Dorsolateral prefrontal cortex (tissue), 120 donors: ENCODE measurements at regions of chr11 and their contacts with region 1.

Region 1: DNA sequence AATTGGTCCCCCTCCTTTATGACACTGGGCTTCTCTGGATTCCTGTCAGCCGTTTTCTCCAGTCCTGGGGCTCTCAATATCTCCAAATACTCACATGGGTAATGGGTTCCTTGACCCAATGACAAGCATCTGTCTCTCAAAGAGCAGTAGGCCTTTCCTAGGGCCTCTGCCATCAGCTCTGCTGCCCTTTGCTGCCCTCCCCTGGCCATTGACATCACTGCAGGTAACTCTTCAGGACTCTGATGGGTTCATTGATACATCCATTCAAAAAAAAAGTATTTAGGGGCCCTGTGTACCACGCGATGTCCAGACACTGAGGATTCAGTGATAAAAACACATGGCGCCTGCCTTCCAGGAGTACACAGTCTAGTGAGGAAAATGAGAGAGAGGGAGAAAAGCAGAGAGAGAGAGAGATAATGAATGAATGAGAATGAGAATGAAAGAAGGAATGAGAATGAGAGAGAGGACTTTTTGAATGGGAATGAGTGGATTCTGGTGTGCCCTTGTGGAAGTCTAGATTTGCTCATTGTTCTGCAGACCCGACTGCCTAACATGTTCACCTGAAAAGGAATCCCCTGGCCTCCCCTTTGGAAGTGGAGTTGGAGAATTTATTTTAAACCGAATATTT is 42.6 kb upstream of the OLFML1 start:
- DNase-seq: peak; percentile 68 to 93 (median 80)
- H3K4me3 ChIP-seq: no peak overlapping the region
- H3K27ac ChIP-seq: no peak overlapping the region
- H3K27me3 ChIP-seq: no peaks in the 10 kb centered on the region
- CTCF ChIP-seq: peak in 55 of 56 donors; percentile 55 to 93 (median 86)

Region 2: DNA sequence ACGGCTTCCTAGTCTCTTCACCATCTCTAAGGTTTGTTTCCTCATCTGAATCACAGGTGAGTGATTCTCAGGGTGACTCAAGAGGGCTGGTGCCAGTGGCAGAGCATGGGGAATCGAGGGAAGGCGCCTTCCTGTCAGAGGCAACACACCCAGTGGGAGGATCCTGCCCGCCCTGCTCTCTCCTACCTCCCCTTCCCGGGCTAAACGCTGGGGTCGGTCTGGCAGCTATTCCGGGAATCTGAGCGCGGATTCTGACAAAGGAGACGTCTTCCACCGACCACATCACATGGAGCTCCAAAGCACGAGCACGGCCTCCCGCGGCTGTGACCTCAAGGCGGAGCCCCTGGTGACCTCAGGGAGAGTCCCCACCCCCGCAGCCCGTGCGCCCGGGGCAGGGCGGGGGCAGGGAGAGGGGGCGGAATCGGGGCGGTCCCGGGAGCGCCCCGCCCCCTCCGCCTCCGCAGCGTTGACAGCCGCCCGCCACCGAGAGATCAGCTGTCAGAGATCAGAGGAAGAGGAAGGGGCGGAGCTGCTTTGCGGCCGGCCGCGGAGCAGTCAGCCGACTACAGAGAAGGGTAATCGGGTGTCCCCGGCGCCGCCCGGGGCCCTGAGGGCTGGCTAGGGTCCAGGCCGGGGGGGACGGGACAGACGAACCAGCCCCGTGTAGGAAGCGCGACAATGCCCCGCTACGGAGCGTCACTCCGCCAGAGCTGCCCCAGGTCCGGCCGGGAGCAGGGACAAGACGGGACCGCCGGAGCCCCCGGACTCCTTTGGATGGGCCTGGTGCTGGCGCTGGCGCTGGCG is 1052.6 kb before region 1 on chr11 and contains the start of gene SMPD1:
- intact Hi-C with region 1: no loop called
- DNase-seq: peak; percentile 87 to 94 (median 92)
- H3K4me3 ChIP-seq: peak within 1 kb of the TSS; percentile 61 to 99 (median 90)
- H3K27ac ChIP-seq: peak within 1 kb of the TSS; percentile 68 to 99 (median 94)
- H3K27me3 ChIP-seq: no peaks in the 10 kb centered on the region
- CTCF ChIP-seq: peak in 24 of 56 donors; percentile 5 to 60 (median 34)
- total RNA-seq, gene SMPD1: 37.6 to 97.6 (median 53.8) TPM

Region 3: DNA sequence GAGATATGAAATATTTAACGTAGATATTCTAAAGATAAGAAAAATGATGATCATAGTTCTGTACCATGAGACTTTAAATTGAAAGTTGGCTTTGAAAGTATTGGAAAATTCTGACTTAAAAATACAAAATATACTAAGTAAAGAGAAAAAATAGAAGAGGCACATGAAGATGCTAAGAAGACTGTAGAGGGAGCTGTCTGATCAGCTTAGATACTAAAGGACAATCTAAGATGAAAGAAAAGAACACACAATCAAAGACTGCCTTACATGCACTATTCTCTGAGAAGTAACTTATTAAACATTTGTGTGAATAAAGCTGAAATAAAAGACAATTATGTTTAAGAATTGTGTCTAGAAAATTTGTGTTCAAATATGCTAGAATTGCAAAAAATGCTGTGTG is 298.8 kb before region 1 on chr11:
- intact Hi-C with region 1: loop called (anchors 2 to 5 kb)
- DNase-seq: no peak
- H3K4me3 ChIP-seq: no peak overlapping the region
- H3K27ac ChIP-seq: no peak overlapping the region
- H3K27me3 ChIP-seq: no peaks in the 10 kb centered on the region
- CTCF ChIP-seq: peak; percentile 48 to 92 (median 69)

Region 4: DNA sequence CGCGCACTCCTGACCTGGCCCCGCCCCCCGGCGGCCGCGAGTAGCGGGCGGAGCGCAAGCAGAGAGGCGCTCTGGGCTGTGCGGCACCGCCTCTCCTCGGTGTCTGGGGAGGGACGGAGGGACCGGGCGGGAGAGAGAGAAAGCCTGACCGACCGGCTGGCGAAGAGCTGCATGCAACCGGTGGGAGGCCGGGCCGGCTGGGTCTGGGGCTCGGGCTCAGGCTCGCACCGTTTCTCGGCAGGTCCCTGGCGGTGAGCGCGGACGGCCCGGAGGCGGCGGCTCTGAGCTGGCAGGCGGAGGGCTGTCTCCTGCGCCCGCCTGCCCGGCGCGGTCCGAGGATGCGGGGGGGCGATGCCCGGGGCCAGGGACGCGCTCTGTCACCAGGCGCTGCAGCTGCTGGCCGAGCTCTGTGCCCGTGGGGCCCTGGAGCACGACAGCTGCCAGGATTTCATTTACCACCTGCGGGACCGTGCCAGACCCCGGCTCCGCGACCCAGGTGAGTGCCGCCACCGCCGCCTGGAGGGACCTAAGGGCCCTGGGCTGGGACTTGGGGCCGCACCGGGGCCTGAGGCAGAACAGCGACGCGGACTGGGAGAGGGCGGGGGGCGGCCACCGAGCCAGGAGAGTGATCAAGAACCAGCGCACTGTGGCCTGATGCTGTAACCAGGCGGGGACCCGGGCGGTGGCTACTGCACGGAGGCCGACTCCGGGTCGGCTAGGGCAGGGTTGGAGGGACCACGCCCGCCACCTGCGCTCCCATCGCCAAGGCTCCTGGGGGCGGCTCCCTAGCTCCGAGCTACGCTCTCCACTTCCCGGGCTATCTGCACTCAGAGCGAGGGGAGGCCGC is 190.6 kb before region 1 on chr11 and contains the start of gene SYT9:
- intact Hi-C with region 1: loop called in 1 of 2 experiments (anchors 5 kb)
- DNase-seq: peak; percentile 38 to 83 (median 72)
- H3K4me3 ChIP-seq: peak within 1 kb of the TSS; percentile 54 to 97 (median 82)
- H3K27ac ChIP-seq: peak within 1 kb of the TSS in 53 of 59 donors; percentile 19 to 86 (median 66)
- H3K27me3 ChIP-seq: peaks cover 0 to 17% (median 0%) of the 10 kb centered on the region in 45 donors
- CTCF ChIP-seq: peak in 45 of 56 donors; percentile 4 to 66 (median 33)
- total RNA-seq, gene SYT9: 8.3 to 25.6 (median 12.9) TPM

Region 5: DNA sequence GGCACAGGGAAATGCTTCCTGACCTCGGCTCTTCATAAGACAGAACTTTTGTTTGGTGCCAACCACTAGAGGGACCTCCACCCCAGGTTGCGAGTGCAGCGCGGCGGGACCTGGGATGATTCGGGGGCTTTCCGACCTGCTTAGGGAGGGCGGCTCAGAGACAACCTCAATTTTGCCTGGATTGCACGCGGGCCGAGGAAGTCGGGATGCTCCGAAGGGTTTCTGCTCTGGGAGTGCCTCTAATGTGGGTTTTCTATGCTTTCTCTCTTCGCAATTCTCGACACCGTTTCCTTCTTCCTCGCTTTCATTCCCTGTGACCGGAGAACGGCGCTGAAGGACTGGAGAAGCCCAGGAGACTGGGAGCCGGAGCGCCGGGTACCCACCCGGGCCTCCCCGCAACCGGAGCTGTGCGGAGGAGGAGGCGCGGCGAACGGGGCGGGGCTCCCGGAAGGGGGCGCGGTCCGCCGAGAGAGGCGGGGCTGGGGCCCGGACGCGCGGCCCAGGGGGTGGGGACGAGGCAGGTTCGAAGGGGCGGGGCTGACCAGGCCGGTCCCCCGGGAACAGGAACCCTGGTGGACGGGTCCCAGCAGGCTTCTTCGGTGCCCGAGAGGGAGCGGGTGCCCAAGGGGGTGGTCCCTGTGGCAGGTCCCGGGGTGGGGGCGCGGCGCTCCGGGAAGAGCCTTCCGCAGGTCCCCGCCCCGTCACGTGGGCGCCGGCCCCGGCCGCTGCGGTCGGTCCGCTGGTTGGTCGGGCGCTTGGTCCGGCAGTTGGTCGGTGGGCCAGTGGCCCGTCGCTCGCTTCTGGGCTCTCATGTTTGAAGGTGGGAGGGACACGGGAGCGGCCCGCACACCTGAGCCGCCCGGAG is 70.8 kb after region 1 on chr11 and contains the start of gene PPFIBP2:
- intact Hi-C with region 1: loop called in 1 of 2 experiments (anchors 5 kb)
- DNase-seq: peak; percentile 66 to 88 (median 78)
- H3K4me3 ChIP-seq: peak within 1 kb of the TSS; percentile 60 to 98 (median 87)
- H3K27ac ChIP-seq: peak within 1 kb of the TSS; percentile 82 to 99 (median 96)
- H3K27me3 ChIP-seq: no peaks in the 10 kb centered on the region
- CTCF ChIP-seq: peak in 55 of 56 donors; percentile 43 to 79 (median 67)
- total RNA-seq, gene PPFIBP2: 14.4 to 115 (median 35.6) TPM

Region 6: DNA sequence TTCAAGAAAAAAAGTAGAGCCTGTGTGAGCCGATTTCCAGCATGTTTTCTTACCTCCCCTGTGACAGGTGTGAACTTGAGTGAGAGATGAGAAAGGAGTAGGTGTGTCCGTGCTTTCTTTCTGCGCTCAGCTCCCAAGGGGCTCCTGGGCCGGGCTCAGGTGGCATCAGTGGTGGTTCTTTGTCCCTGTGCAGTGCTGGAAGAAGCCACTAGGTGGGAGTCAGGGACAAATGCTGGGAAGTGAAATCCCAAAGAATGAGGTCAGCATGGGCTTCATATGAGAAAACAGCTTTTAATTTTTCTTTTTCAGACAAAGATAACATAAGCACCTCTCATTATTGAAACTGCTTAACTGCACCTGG is 128.9 kb after region 1 on chr11:
- intact Hi-C with region 1: loop called in 1 of 2 experiments (anchors 10 kb)
- DNase-seq: peak; percentile 49 to 79 (median 70)
- H3K4me3 ChIP-seq: no peak overlapping the region
- H3K27ac ChIP-seq: peak overlapping the region; percentile 26 to 99 (median 81)
- H3K27me3 ChIP-seq: no peaks in the 10 kb centered on the region
- CTCF ChIP-seq: peak; percentile 81 to 99 (median 95)

Region 7: GRCh38 chr11:7612661-7613393 is 170.1 kb after region 1 on chr11:
- intact Hi-C with region 1: no loop called
- DNase-seq: no peak
- H3K4me3 ChIP-seq: no peak overlapping the region
- H3K27ac ChIP-seq: peak overlapping the region in 24 of 59 donors; percentile 1 to 58 (median 26)
- H3K27me3 ChIP-seq: no peaks in the 10 kb centered on the region
- CTCF ChIP-seq: no peak

Region 8: DNA sequence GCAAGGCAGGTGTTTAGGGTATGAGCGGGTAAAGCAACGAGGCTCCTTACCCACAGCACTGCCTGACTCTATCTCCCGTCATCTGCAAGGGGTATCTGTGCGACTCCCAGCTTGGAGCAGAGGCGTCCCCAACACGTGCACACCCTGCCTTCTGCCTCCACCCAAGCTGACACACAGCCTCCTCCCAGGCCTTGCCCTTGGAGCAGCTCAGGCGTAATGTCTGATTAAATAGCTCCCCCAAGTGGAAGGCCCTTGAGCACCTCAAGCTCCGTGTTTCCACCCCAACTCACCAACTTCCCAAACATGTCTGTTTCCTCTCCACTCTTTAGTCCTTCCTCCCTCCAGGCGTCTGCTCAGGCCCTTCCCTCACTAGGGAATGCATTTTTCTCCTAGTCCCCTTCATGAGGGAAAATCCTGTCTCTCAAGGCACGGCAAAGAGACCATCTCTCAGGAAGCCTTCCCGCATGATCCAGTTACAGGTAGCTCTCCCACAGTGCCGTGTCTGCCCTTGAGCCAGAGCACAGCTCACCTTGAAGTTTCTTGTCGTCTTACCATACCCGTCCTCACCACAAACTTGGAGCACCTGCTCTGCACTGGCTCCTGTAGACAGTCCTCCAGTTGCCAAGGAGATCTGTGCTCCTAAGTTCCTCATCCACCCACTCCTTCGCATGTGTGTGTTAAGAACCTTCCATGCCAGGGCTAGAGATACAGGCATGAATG is 214.8 kb after region 1 on chr11:
- intact Hi-C with region 1: loop called in 1 of 2 experiments (anchors 10 kb)
- DNase-seq: peak in 9 of 10 donors; percentile 23 to 78 (median 71)
- H3K4me3 ChIP-seq: no peak overlapping the region
- H3K27ac ChIP-seq: peak overlapping the region in 56 of 59 donors; percentile 28 to 98 (median 82)
- H3K27me3 ChIP-seq: no peaks in the 10 kb centered on the region
- CTCF ChIP-seq: peak in 55 of 56 donors; percentile 50 to 90 (median 73)

Region 9: DNA sequence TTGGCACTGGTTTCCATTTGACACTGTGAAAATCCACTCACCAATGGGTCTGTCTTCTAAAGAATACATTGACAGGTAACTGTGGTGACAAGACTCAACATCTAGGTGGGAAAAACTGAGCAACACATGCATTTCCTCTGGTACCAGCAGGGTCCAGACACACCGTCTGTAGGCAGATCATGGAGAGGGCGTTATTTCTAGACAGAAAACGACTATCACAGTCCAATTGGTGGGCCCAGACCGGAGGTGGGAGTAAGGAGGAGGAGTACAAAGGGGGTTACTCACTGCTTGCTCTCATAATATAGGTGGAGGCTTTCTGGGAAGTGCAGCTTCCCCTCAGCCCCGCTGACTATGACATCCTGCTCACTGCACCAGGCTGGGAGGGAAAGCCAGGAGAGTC is 253.7 kb after region 1 on chr11:
- intact Hi-C with region 1: loop called in 1 of 2 experiments (anchors 2 kb)
- DNase-seq: no peak
- H3K4me3 ChIP-seq: no peak overlapping the region
- H3K27ac ChIP-seq: peak overlapping the region in 6 of 59 donors; percentile 6 to 79 (median 59)
- H3K27me3 ChIP-seq: peaks cover 0 to 6% (median 0%) of the 10 kb centered on the region in 45 donors
- CTCF ChIP-seq: no peak